ENCODE measurements at regions of chr12 and their contacts with region 1.

Region 1: GRCh38 chr12:116737774-116738700 is at the starts of genes RNFT2 and SPRING1:
- DNase-seq: peak; percentile 99
- H3K4me3 Mint-ChIP-seq: peak within 1 kb of the TSS; percentile 86
- H3K27ac Mint-ChIP-seq: peak within 1 kb of the TSS; percentile 69
- H3K4me1 Mint-ChIP-seq: peaks cover 31% of the 10 kb centered on the region
- H3K27me3 Mint-ChIP-seq: no peaks in the 10 kb centered on the region
- CTCF ChIP-seq: no peak
- total RNA-seq, gene RNFT2: 22.5 and 32.0 TPM in 2 replicates
- total RNA-seq, gene SPRING1: 62.1 and 87.4 TPM in 2 replicates

Region 2: DNA sequence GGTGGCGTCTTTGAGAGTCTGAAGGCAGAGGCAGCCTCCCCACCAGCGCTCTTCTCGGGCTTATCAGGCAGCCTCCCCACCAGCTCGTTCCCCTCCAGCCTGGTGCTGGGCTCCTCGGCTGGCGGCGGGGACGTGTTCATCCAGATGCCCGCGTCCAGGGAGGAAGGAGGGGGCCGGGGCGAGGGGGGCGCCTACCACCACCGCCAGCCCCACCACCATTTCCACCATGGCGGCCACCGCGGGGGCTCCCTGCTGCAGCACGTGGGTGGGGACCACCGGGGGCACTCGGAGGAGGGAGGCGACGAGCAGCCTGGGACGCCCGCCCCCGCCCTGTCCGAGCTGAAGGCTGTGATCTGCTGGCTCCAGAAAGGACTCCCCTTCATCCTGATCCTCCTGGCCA is 11.8 kb after region 1 on chr12:
- CTCF ChIA-PET with region 1: no interaction called
- intact Hi-C with region 1: no loop called
- DNase-seq: no peak
- H3K4me3 Mint-ChIP-seq: no peak overlapping the region
- H3K27ac Mint-ChIP-seq: no peak overlapping the region
- H3K4me1 Mint-ChIP-seq: no peaks in the 10 kb centered on the region
- H3K27me3 Mint-ChIP-seq: no peaks in the 10 kb centered on the region
- CTCF ChIP-seq: no peak

Region 3: GRCh38 chr12:116818948-116819832 is 81.2 kb after region 1 on chr12:
- CTCF ChIA-PET with region 1: no interaction called
- intact Hi-C with region 1: loop called (anchors 5 kb)
- DNase-seq: peak; percentile 96
- H3K4me3 Mint-ChIP-seq: peak overlapping the region; percentile 78
- H3K27ac Mint-ChIP-seq: peak overlapping the region; percentile 93
- H3K4me1 Mint-ChIP-seq: peaks cover 8% of the 10 kb centered on the region
- H3K27me3 Mint-ChIP-seq: no peaks in the 10 kb centered on the region
- CTCF ChIP-seq: no peak

Region 4: DNA sequence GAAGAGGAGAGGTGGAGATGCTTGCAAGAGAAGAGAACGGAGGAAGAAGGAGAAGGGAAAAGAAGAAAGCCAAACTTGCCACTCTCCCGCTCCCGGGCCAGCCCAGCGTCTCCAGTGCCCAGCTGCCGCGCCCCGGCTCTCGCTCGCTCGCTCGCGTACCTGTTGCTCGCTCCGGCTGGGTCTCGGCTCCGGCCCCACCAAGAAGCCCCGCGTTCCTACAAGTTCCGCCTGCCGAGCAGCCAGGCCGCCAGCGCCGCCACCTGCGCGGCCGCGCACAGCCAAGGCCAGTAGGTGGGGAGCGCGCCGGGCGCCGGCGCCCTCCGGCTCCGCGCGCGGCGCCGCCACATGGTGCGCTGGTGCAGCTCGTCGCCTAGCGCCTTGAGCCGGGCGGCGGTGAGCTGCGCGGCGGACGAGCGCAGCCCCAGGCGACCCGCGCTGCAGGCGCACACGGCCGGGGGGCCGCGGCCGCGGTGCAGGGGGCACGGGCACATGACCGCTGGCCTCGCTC is 142.8 kb after region 1 on chr12:
- CTCF ChIA-PET with region 1: interaction called, 3 read pairs
- intact Hi-C with region 1: loop called (anchors 10 kb)
- DNase-seq: peak; percentile 61
- H3K4me3 Mint-ChIP-seq: peak overlapping the region; percentile 65
- H3K27ac Mint-ChIP-seq: no peak overlapping the region
- H3K4me1 Mint-ChIP-seq: peaks cover 30% of the 10 kb centered on the region
- H3K27me3 Mint-ChIP-seq: peaks cover 84% of the 10 kb centered on the region
- CTCF ChIP-seq: no peak

Region 5: GRCh38 chr12:116916714-116917114 is 178.7 kb after region 1 on chr12:
- CTCF ChIA-PET with region 1: interaction called, 3 read pairs
- intact Hi-C with region 1: loop called (anchors 1 kb)
- DNase-seq: peak; percentile 69
- H3K4me3 Mint-ChIP-seq: peak overlapping the region; percentile 7
- H3K27ac Mint-ChIP-seq: peak overlapping the region; percentile 92
- H3K4me1 Mint-ChIP-seq: peaks cover 87% of the 10 kb centered on the region
- H3K27me3 Mint-ChIP-seq: no peaks in the 10 kb centered on the region
- CTCF ChIP-seq: peak; percentile 34

Region 6: DNA sequence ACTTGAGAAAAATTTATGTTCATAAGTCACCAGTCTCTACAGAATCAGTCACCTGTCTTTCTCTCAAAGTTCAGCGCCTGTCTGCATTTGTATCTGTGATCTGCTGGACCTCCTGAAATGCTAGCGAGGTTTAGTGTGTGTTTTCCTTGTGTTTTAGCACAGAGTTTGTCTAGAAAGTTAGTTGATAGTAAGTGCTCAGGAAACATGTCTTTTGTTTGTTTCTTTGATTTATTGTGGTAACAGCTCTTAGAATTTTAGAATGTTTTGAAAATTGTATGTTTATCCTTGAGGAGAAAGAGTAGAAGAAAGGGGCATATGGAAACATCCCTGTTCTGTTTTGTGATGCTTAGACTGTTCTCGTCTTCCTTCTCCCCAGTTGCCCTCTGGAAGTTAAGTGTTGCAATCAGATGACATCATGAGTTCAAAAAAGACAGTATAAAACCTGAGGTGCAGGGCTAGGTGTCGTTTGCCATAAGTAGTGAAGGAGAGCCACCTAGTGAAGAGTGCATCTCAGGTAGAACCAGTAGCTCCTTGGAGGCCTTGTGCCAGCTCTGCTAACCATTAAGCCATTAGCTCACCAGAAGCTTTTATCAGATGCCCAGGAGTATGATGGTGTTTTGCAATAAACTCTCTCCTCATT is 217.5 kb after region 1 on chr12:
- CTCF ChIA-PET with region 1: interaction called, 5 read pairs
- intact Hi-C with region 1: loop called (anchors 10 kb)
- DNase-seq: peak; percentile 72
- H3K4me3 Mint-ChIP-seq: no peak overlapping the region
- H3K27ac Mint-ChIP-seq: peak overlapping the region; percentile 69
- H3K4me1 Mint-ChIP-seq: peaks cover 28% of the 10 kb centered on the region
- H3K27me3 Mint-ChIP-seq: no peaks in the 10 kb centered on the region
- CTCF ChIP-seq: no peak

Measured in Calu3 (cell line).